ENCODE measurements at regions of chr11 and their contacts with region 1.

Region 1: DNA sequence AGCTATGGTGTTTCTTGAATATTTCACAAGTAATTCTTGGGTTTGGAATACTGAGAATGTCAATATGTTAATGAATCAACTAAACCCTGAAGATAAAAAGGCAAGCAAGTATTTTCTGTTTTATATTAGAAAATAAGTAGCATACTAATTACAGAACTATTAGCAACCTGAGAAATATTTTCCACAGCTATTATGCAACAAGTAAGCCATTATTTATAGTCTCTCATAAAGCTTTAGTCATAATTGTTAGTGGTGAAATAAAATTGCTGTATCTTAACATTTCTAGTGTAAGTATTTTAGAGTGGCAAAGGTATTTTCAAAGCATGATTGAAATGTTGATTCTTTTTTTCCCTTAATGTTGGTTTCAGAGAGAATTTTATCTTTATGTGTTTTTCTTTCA is 53.3 kb downstream of the FAR1 start:
- DNase-seq: no peak
- H3K4me3 ChIP-seq: no peak overlapping the region
- H3K4me3 Mint-ChIP-seq: no peak overlapping the region
- H3K27ac ChIP-seq: no peak overlapping the region
- H3K27ac Mint-ChIP-seq: no peak overlapping the region
- H3K4me1 ChIP-seq: no peaks in the 10 kb centered on the region
- H3K4me1 Mint-ChIP-seq: peaks cover 4 to 13% (median 7%) of the 10 kb centered on the region in 3 donors
- H3K27me3 ChIP-seq: no peaks in the 10 kb centered on the region
- H3K27me3 Mint-ChIP-seq: no peaks in the 10 kb centered on the region

Region 2: GRCh38 chr11:13705710-13706109 is 16.1 kb before region 1 on chr11:
- CTCF ChIA-PET with region 1: no interaction called
- POLR2A ChIA-PET with region 1: no interaction called
- DNase-seq: no peak
- H3K4me3 ChIP-seq: no peak overlapping the region
- H3K4me3 Mint-ChIP-seq: no peak overlapping the region
- H3K27ac ChIP-seq: no peak overlapping the region
- H3K27ac Mint-ChIP-seq: no peak overlapping the region
- H3K4me1 ChIP-seq: no peaks in the 10 kb centered on the region
- H3K4me1 Mint-ChIP-seq: peaks cover 0 to 2% (median 0%) of the 10 kb centered on the region in 3 donors
- H3K27me3 ChIP-seq: no peaks in the 10 kb centered on the region
- H3K27me3 Mint-ChIP-seq: no peaks in the 10 kb centered on the region

Region 3: GRCh38 chr11:14914541-14914940 is 1192.8 kb after region 1 on chr11:
- CTCF ChIA-PET with region 1: no interaction called
- POLR2A ChIA-PET with region 1: interaction called, 10 read pairs
- DNase-seq: no peak
- H3K4me3 ChIP-seq: no peak overlapping the region
- H3K4me3 Mint-ChIP-seq: no peak overlapping the region
- H3K27ac ChIP-seq: no peak overlapping the region
- H3K27ac Mint-ChIP-seq: no peak overlapping the region
- H3K4me1 ChIP-seq: no peaks in the 10 kb centered on the region
- H3K4me1 Mint-ChIP-seq: no peaks in the 10 kb centered on the region
- H3K27me3 ChIP-seq: no peaks in the 10 kb centered on the region
- H3K27me3 Mint-ChIP-seq: peaks cover 4 to 8% of the 10 kb centered on the region in 2 donors

Measured in CD8-positive, alpha-beta memory T cell (primary cell).